Activated CD4-positive, alpha-beta T cell treated with anti-CD3 and anti-CD28 coated beads for 36 hours (primary cell): ENCODE measurements at regions of chr11 and their contacts with region 1.

Region 1: GRCh38 chr11:97506076-97506759 is 1116.4 kb downstream of the JRKL start:
- DNase-seq: no peak
- ATAC-seq: no peak
- H3K4me3 Mint-ChIP-seq: no peak overlapping the region
- H3K27ac Mint-ChIP-seq: no peak overlapping the region
- H3K4me1 Mint-ChIP-seq: no peaks in the 10 kb centered on the region
- H3K27me3 Mint-ChIP-seq: no peaks in the 10 kb centered on the region

Region 2: DNA sequence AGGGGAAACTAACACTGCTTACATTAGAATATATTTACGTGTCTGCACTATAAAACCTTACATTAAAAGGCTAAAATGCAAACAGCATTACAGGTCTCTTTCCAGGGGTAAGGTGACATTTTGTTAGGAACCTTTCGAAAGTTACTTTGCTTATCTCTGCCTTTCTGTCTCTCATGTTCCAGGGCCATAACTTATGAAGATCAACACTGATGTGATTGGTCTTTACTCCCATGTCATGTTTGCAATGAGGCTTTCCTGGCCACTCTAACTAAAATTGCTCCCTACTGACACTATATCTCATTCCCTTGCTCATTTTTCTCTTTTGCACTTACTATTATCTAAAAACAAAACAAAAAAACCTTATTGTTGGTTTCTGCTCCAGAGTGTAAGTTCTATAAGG is 997.4 kb before region 1 on chr11:
- CTCF ChIA-PET with region 1: no interaction called
- POLR2A ChIA-PET with region 1: interaction called, 13 read pairs
- intact Hi-C with region 1: no loop called
- DNase-seq: no peak
- ATAC-seq: no peak
- H3K4me3 Mint-ChIP-seq: no peak overlapping the region
- H3K27ac Mint-ChIP-seq: no peak overlapping the region
- H3K4me1 Mint-ChIP-seq: no peaks in the 10 kb centered on the region
- H3K27me3 Mint-ChIP-seq: peaks cover 5% of the 10 kb centered on the region